HCT116 (cell line): ENCODE measurements at regions of chr17 and their contacts with region 1.

Region 1: GRCh38 chr17:67421869-67422273 is 44.8 kb downstream of the PITPNC1 start:
- DNase-seq: peak; percentile 100
- ATAC-seq: peak; percentile 90
- H3K4me3 ChIP-seq: peak overlapping the region; percentile 0 to 31; a peak in 3 of 4 replicates
- H3K27ac ChIP-seq: peak overlapping the region; percentile 95
- H3K4me1 ChIP-seq: peaks cover 72 to 92% of the 10 kb centered on the region in 2 experiments
- H3K27me3 ChIP-seq: no peaks in the 10 kb centered on the region
- CTCF ChIP-seq: no peak
- POLR2A ChIP-seq: no peak
- RAD21 ChIP-seq: peak; percentile 57

Region 2: DNA sequence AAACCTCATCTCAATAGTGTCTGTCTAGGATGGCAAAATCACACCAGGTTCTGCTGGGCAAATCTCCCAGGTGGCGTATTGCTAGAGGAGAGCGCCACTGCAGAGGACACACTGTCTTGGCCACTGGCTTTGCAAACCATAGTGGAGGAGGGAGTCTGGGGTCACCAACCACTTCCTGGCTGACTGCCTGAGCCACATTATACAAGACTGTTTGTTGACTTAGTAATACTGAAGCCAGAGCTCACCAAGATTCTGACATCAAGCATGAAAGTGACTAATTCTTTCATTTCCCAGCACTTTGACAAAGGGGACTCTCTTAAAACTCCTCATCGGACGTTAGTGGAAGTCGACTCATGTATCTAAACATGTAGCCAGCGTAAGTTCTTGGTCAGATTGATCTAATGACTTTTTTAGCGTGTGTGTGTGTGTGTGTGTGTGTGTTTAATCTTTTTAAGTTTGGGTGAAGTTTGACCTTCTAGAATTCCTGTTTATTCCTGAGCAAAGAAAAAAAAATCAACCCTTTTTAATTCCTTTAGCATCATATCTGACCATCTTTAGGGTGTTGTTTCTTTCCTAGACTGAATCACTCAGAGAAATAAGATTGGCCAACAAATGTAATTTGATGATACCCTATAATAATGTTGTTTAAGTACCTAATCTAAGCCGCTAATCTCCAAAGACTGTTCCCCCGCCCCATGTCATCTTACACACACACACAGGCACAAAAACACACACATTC is 31.1 kb before region 1 on chr17:
- CTCF ChIA-PET with region 1: interaction called, 4 read pairs
- POLR2A ChIA-PET with region 1: interaction called, 5 read pairs
- RAD21 ChIA-PET with region 1: no interaction called
- intact Hi-C with region 1: loop called (anchors 2 kb)
- DNase-seq: peak; percentile 89
- ATAC-seq: peak; percentile 80
- H3K4me3 ChIP-seq: peak overlapping the region in 1 of 2 experiments; percentile 36; a peak in 2 of 4 replicates
- H3K27ac ChIP-seq: peak overlapping the region; percentile 54
- H3K4me1 ChIP-seq: peaks cover 26 to 58% of the 10 kb centered on the region in 2 experiments
- H3K27me3 ChIP-seq: no peaks in the 10 kb centered on the region
- CTCF ChIP-seq: no peak
- POLR2A ChIP-seq: no peak
- RAD21 ChIP-seq: peak; percentile 36; the same call in 1 of the 2 replicates

Region 3: DNA sequence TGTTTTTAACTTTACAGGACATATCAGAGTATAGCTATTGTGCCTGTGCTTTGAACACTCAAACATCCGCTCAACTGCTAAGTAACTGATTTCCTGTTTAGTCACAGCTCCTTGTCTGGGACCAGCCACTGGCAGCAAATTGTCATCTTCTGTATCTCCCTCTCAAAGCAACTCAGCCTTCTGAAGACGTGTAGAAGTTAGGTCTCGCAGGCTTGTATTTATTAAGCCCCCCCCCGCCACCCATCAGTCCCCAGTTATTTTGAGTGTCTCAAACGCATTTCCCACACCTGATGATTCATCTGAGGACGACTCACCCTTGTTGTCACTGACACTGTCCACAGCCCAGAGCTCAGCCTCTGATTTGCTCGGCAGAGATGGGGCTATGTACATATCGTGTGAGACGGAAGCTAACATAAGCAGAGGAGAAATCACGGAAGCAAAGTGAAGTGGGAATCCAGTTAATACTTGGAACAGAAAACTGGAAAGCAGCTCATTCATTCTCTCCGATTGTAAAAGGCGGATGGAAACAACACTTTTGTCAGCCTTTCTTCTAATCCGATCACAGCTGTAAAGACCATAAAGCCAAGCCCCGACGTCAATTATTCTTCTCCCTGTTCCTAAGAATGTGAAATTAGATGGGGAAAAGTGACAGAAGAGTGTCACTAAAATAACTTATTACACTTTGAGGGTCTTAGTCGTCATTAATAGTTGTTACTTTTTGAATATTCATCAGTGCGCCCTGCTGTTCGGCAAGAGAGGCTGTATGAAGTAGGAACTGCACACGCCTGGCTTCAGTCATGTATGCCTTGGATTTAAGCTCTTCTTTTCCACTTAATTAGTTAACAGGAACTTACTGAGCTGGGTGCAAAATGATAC is 19.4 kb after region 1 on chr17:
- CTCF ChIA-PET with region 1: no interaction called
- POLR2A ChIA-PET with region 1: interaction called, 32 read pairs
- RAD21 ChIA-PET with region 1: interaction called, 3 to 9 read pairs
- intact Hi-C with region 1: no loop called
- DNase-seq: peak; percentile 81
- ATAC-seq: peak; percentile 92
- H3K4me3 ChIP-seq: peak overlapping the region; percentile 25 to 48
- H3K27ac ChIP-seq: peak overlapping the region; percentile 48
- H3K4me1 ChIP-seq: peaks cover 13 to 40% of the 10 kb centered on the region in 2 experiments
- H3K27me3 ChIP-seq: no peaks in the 10 kb centered on the region
- CTCF ChIP-seq: no peak
- POLR2A ChIP-seq: no peak
- RAD21 ChIP-seq: 0 out of 2 replicates have a peak, but pooled peaks have one; percentile 26